Activated CD4-positive, alpha-beta memory T cell treated with anti-CD3 and anti-CD28 coated beads for 36 hours (primary cell): ENCODE measurements at regions of chr3 and their contacts with region 1.

Region 1: DNA sequence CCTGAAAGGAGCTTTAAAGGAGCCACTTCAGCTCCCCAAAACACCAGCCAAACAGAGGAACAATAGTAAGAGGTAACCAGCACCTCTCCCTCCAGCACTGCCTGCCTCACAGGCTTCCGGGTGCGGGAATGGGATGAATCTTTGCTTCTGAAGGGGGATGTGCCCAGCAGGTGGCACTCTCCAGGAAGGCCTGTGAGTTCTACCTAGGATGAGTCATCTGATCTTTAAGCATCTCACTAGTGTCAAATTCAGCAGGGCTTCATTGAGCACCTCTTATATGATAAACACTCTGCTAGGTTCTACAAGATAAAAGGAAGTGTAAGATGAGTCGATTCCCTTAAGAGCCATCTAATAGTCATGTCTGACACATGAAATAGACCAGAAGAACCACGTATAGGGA is 237.4 kb upstream of the UMPS start:
- DNase-seq: peak; percentile 36
- H3K4me3 Mint-ChIP-seq: no peak overlapping the region
- H3K27ac Mint-ChIP-seq: no peak overlapping the region
- H3K4me1 Mint-ChIP-seq: peaks cover 12% of the 10 kb centered on the region
- H3K27me3 Mint-ChIP-seq: peaks cover 3% of the 10 kb centered on the region

Region 2: GRCh38 chr3:124552239-124552638 is 59.4 kb after region 1 on chr3:
- CTCF ChIA-PET with region 1: interaction called, 3 read pairs
- POLR2A ChIA-PET with region 1: no interaction called
- intact Hi-C with region 1: loop called (anchors 1 kb)
- DNase-seq: no peak
- H3K4me3 Mint-ChIP-seq: no peak overlapping the region
- H3K27ac Mint-ChIP-seq: no peak overlapping the region
- H3K4me1 Mint-ChIP-seq: peaks cover 7% of the 10 kb centered on the region
- H3K27me3 Mint-ChIP-seq: peaks cover 26% of the 10 kb centered on the region